ENCODE measurements at regions of chr22 and their contacts with region 1.

Region 1: DNA sequence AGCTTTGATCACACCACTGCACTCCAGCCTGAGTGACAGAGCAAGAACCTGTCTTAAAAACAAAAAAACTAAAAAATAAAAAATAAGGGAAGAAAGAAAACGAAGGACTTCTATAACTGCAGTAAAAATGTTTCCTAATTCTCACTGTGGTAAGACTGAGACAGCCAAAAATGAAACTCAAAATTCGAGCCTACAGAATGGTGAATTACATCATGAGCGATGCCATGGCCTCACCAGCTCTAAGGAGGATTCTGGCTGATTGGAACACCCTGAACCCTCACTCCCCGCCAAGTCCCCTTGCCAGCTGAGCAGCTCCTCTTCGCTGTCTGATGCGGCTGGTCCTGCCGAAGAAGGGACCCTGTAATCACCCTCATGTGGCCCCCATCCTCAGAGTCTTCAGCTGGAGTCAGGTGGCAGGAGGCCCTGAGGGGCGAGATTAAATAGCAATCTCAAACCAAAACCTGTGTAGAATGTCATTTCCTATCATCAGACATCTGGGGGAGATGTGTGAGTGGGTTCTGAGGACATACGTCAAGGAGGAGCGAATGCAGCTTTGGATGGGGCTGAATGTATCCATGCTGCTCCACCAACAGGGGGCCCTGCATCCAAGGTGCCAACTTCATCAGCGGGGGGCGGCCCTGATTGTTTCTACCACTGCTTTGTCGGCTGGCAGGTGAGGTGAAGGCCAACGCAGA is 29.2 kb downstream of the PDGFB start:
- DNase-seq: peak; percentile 61
- ATAC-seq: peak; percentile 78
- H3K4me3 Mint-ChIP-seq: no peak overlapping the region
- H3K27ac Mint-ChIP-seq: no peak overlapping the region
- H3K4me1 Mint-ChIP-seq: peaks cover 5% of the 10 kb centered on the region
- H3K27me3 Mint-ChIP-seq: peaks cover 22% of the 10 kb centered on the region

Region 2: DNA sequence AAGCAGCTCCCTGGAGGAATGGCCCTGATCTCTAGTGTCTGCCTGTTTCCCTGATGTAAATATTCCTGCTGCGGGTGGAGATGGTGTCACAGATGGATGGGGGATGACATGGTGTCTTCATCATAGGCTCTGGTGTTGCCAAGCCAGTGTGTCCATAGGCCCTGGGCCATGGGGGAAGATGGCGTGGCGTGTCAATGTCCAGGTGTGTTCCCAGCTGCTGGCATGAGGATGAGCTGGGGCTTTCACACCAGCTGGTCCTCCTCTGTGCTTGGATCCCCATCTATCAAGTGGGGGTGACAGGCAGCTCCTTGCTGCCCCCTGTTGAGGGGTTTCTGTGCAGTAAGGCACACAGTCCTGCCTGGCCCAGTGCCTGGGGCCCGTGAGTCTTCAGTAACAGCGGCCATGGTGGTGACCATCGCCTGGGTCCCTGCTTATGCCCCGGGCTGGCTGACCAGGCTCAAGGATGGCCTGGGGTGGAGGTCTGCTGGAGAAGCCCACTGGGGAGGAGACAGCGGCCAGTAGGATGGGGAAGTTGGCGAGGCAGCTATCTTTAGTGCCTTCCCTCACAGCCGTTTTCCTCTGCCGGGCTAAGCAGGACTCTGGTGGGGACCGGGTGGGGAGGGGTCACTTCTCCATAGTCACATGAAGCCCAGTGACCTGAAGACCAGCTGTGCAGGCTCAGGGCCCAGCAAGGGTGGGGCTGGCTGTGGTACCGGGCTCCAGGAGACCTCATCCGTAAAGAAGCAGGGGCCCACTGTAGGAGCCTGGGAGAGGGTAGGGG is 91.2 kb after region 1 on chr22:
- CTCF ChIA-PET with region 1: interaction called, 4 read pairs
- POLR2A ChIA-PET with region 1: interaction called, 3 read pairs
- intact Hi-C with region 1: loop called in 1 of 2 experiments (anchors 5 kb)
- DNase-seq: peak; percentile 79
- ATAC-seq: peak; percentile 60
- H3K4me3 Mint-ChIP-seq: no peak overlapping the region
- H3K27ac Mint-ChIP-seq: no peak overlapping the region
- H3K4me1 Mint-ChIP-seq: peaks cover 2% of the 10 kb centered on the region
- H3K27me3 Mint-ChIP-seq: no peaks in the 10 kb centered on the region